Esophagus muscularis mucosa (tissue), 4 donors: ENCODE measurements at regions of chr2 and their contacts with region 1.

Region 1: DNA sequence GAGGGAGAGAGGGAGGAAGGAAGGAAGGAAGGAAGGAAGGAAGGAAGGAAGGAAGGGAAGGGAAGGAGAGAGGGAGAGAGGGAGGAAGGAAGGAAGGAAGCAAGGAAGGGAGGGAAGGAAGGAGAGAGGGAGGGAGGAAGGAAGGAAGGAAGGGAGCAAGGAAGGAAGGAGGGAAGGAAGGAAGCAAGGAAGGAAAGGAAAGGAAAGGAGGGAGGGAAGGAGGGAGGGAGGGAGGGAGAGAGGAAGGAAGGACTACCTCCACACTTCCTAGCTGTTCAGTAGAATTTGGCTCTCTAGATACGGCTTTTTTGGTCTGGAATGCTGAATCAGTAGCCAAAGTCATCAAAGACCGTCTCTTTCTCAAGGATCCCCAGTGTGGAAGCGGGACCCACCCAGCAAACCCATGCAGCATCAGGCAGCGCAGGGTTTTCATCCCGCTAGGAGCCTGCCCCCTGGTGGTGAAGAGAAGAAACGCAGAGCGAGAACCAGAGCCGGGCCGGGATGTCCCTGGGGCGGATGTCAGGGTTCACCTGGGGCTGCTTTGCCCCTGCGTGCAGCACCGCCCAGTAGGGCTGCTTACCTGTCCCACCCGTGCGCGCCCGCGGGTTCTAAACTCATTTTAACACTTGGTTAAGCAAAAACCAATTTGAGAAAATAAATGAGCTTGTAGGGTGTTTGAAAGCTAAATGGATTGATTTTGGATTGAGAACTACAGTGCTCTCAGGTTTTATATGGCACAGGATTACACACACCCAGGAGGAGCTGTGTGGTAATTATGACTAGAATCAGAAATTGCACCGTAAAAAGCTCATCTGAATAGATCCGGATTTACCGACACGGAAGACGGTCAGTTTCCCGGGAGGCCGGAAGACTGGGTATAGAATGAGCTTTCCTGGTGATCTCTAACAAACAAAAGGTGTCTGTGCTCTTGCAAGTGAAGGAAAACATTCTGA is 48.1 kb upstream of the ARL4C start:
- DNase-seq: no peak
- H3K4me3 ChIP-seq: no peak overlapping the region
- H3K27ac ChIP-seq: no peak overlapping the region
- H3K4me1 ChIP-seq: peaks cover 0 to 9% (median 5%) of the 10 kb centered on the region in 4 donors
- H3K27me3 ChIP-seq: peaks cover 0 to 21% (median 0%) of the 10 kb centered on the region in 4 donors
- CTCF ChIP-seq: peak; percentile 65 to 97 (median 84)
- EP300 ChIP-seq: no peak
- POLR2A ChIP-seq: no peak

Region 2: GRCh38 chr2:233976690-233977294 is 568.1 kb before region 1 on chr2:
- intact Hi-C with region 1: loop called (anchors 5 kb)
- DNase-seq: no peak
- H3K4me3 ChIP-seq: no peak overlapping the region
- H3K27ac ChIP-seq: no peak overlapping the region
- H3K4me1 ChIP-seq: peaks cover 0 to 7% (median 3%) of the 10 kb centered on the region in 4 donors
- H3K27me3 ChIP-seq: peaks cover 0 to 50% (median 0%) of the 10 kb centered on the region in 4 donors
- CTCF ChIP-seq: peak in 2 of 3 experiments; percentile 5 to 20
- EP300 ChIP-seq: no peak
- POLR2A ChIP-seq: no peak

Region 3: DNA sequence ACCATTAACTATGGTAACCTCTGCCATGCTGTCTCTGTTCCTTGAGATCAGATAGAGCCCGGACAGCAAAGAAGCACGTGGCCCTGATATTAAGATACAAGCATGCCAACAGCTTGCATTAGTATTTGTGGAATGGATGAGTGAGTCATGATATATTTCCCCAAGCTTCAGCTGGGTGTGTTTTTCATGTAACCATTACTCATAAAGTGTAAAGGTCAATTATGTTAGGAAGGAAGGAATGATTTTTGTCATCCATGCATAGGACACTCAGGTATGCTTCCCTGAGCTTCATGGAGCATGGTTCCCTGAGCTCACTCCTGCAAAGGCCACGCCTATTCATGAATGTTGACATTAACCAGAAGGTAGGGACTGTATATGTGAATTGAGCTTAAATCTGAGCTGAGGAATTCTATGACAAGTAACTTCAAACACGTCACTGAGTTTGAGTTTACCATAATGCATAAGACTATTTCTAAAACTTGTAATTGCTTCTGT is 122.6 kb before region 1 on chr2:
- intact Hi-C with region 1: no loop called
- DNase-seq: no peak
- H3K4me3 ChIP-seq: no peak overlapping the region
- H3K27ac ChIP-seq: no peak overlapping the region
- H3K4me1 ChIP-seq: peaks cover 0 to 21% (median 7%) of the 10 kb centered on the region in 4 donors
- H3K27me3 ChIP-seq: no peaks in the 10 kb centered on the region
- CTCF ChIP-seq: no peak
- EP300 ChIP-seq: no peak
- POLR2A ChIP-seq: no peak

Region 4: GRCh38 chr2:234745347-234745746 is 200.4 kb after region 1 on chr2:
- intact Hi-C with region 1: no loop called
- DNase-seq: peak; percentile 72
- H3K4me3 ChIP-seq: no peak overlapping the region
- H3K27ac ChIP-seq: no peak overlapping the region
- H3K4me1 ChIP-seq: no peaks in the 10 kb centered on the region
- H3K27me3 ChIP-seq: no peaks in the 10 kb centered on the region
- CTCF ChIP-seq: no peak
- EP300 ChIP-seq: no peak
- POLR2A ChIP-seq: no peak